ENCODE measurements at regions of chr1 and their contacts with region 1.

Region 1: GRCh38 chr1:151327223-151327902 is at the start of gene PI4KB:
- DNase-seq: peak; percentile 62 to 96 (median 84)

Region 2: GRCh38 chr1:151227634-151228033 is 99.7 kb before region 1 on chr1:
- intact Hi-C with region 1: no loop called
- DNase-seq: no peak

Region 3: DNA sequence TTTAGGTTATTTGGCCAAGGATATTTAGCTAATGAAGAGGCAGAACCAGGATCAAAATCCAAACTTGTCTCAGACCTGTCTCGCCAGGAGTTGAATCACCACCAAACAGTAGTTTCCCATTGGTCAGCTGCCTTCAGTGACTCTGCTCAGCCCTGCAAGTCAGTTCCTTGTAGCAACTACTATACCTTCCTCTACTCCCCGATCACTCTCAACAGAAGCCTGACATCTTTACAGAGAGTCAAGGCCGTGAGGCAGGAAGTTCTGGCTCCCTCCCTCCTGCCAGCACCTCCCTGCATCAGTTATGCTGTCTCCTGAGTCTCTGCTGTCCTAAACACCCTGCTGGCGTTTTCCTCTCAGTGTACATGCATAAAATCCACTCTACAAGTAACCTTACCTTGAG is 59.6 kb before region 1 on chr1:
- intact Hi-C with region 1: no loop called
- DNase-seq: peak in 1 of 10 donors; percentile 7

Region 4: GRCh38 chr1:151281969-151282882 is 45.1 kb before region 1 on chr1 and contains the start of gene ZNF687:
- intact Hi-C with region 1: loop called (anchors 5 kb)
- DNase-seq: peak; percentile 100

Region 5: DNA sequence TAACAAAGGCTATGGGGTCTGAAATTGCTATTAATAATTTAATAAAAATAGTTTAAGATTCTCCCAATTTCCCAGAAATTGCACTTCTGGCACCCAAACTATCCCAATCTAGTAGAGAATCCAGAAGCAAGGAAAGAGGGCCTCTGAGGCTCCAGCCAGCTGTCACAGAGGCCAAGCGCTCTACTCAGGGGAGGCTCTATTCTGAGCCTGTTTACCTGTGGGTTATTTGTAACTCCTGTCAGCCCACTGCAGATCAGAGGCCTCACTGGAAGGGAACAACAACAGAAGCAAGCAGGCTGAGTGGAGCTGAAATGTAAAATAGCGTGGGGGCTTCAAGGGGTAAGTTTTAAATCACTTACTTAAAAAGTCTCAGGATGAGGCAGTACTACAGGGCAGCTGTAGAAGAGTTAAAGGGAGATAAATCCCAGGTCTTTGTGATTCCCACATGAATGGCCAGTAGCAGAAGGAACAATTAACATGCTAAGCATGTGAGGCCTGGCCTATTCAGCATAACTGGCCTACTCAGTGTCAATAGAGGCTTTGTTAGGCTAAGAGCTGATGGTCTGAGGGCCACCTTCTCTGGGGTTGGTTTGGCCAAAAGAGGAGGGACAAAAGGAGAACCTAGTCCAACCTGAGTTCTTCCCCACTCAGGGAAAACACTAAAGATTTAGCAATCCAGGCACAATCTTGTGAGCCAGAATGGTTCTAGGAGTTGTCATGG is 32.5 kb before region 1 on chr1:
- intact Hi-C with region 1: loop called (anchors 1 kb)
- DNase-seq: peak in 2 of 10 donors; percentile 26 to 47

Region 6: DNA sequence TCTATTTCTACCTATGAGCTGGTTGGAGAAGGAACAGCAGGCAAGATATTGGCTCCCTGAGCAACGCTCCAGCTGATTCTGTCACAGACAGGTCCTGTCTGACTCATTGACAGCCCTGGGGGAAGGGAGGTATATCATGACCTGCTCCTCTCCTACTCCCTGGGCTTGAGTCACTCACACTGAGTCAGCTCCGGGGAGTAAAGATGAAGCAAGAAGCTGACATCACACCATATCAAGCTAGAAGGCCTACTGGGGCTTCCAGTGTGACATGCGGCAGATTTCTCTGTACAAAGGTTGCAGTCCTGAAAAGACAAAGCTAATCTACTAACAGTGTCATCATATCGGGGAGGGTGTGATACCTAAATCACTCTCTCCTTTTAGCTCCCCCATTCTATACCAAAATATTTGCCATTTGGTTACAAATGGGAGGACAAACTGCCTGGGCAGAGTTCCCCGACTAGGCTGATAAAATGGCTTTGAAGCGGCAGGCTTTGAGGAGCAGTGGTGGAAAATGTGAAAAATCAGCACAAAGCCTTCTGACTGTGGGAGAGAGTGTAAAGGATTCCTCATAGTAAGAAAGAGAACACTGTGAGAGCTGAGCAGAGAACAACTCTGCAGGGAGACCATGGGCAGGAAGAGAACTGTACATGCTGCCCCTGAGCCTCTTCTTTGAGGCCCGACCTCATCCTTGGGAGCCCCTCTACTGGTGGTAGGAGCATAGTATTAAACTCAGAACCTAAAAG is 15.6 kb before region 1 on chr1:
- intact Hi-C with region 1: loop called (anchors 2 kb)
- DNase-seq: peak in 6 of 10 donors; percentile 36 to 92 (median 58)

Measured in posterior cingulate gyrus (tissue), 11 donors.